Mammary epithelial cell (primary cell): ENCODE measurements at regions of chr19 and their contacts with region 1.

Region 1: DNA sequence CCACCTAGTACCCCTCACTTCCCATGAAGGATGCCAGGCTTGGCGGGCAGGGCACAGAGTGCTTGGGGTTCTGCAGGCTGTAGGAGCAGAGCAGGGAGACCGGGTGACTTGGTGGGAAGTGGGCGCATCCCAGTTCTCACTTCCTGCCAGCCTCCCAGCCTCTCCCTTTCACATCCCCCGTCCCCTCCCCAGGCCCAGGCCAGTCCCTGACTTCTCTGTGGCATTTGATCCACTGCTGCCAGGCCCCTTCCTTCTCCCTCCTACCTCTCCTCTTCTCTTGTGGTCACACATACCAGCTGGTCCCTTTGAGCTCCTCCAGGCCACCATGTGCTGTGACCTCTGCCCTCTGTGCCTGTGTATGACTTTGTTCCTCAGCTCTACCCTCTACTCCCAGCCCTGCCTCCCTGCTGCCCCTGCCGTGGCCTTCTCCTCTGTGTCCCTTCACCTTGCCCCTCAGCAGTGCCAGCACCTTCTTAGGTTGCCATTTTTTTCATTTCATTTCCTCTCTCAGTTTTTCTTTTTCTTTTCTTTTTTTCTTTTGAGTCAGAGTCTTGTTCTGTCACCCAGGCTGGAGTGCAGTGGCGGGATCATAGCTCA is 19.5 kb downstream of the MYO1F start:
- DNase-seq: no peak
- H3K4me3 ChIP-seq: no peak overlapping the region
- H3K27ac ChIP-seq: no peak overlapping the region
- H3K4me1 ChIP-seq: no peaks in the 10 kb centered on the region
- H3K27me3 ChIP-seq: no peaks in the 10 kb centered on the region
- CTCF ChIP-seq: no peak

Region 2: GRCh38 chr19:8438236-8438635 is 119.5 kb before region 1 on chr19:
- CTCF ChIA-PET with region 1: no interaction called
- dilution Hi-C with region 1: no loop called
- in situ Hi-C with region 1: no loop called
- intact Hi-C with region 1: no loop called
- DNase-seq: no peak
- H3K4me3 ChIP-seq: no peak overlapping the region
- H3K27ac ChIP-seq: no peak overlapping the region
- H3K4me1 ChIP-seq: no peaks in the 10 kb centered on the region
- H3K27me3 ChIP-seq: no peaks in the 10 kb centered on the region
- CTCF ChIP-seq: no peak

Region 3: DNA sequence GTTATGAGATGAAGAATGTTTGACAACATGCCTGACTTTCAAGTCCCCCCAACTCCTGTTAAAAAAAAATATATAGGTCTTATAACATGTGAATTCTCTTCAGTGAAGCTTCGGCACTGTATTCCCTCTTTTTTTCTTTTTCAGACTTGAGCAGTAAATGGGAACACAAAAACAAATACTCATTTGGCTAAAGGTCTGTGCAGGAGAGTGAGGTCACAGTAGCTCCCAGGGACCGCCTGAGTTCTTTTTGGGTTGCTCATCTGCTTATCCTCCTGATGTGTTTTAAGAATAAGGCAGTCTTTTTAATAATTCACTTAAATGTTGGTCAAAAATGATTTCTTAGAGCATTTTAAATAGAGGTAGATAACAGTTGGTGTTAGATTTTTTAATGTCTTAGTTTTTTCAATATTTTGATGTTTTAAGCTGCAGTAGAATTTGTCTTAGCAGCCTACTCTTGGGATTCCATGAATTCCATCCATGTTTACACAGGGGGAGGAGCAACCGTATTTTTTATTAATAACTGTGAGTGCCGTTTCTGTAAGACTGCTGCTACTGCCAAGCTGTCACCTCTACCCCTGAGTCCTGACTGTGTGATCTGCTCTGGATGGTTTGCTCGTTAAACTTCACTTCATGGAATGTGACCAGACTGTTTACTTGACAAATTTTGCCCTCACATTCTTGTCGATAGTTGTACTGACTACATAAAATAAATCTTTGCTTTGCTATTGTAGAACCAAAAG is 98.0 kb before region 1 on chr19:
- CTCF ChIA-PET with region 1: no interaction called
- dilution Hi-C with region 1: no loop called
- in situ Hi-C with region 1: no loop called
- intact Hi-C with region 1: no loop called
- DNase-seq: no peak
- H3K4me3 ChIP-seq: no peak overlapping the region
- H3K27ac ChIP-seq: no peak overlapping the region
- H3K4me1 ChIP-seq: peaks cover 16% of the 10 kb centered on the region
- H3K27me3 ChIP-seq: no peaks in the 10 kb centered on the region
- CTCF ChIP-seq: no peak

Region 4: DNA sequence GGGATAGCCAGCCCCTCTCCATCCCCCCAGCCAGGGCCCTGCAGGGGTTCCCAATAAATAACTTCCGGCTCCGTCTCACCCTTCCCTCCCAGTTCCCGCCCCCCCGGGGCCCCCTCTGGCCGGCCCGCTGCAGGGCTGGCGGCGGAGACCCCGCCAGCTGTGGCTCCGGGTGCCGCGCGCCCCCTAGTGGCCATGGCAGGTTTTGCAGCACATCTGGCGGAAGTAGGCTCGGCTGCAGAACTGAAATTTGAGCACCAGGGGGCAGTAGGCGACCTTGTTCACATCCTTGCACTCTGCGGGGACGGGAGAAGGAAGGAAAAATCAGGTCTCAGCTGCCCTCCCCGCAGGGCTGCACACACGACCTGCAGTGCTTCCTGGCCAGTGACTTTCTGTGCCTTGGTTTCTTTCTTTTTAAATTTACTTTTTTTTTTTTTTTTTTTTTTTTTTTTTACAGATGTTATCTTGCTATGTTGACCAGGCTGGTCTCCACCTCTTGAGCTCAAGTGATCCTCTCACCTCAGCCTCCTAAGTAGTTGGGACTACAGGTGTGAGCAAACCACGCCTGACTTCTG is 23.1 kb after region 1 on chr19:
- CTCF ChIA-PET with region 1: interaction called, 18 read pairs
- dilution Hi-C with region 1: no loop called
- in situ Hi-C with region 1: no loop called
- intact Hi-C with region 1: no loop called
- DNase-seq: peak; percentile 42
- H3K4me3 ChIP-seq: no peak overlapping the region
- H3K27ac ChIP-seq: no peak overlapping the region
- H3K4me1 ChIP-seq: no peaks in the 10 kb centered on the region
- H3K27me3 ChIP-seq: no peaks in the 10 kb centered on the region
- CTCF ChIP-seq: peak; percentile 97 to 99